Left ventricle myocardium superior (tissue), 1 donor: ENCODE measurements at regions of chr1 and their contacts with region 1.

Region 1: GRCh38 chr1:174769961-174770549 is 229.7 kb upstream of the CACYBP start:
- DNase-seq: no peak
- ATAC-seq: no peak

Region 2: DNA sequence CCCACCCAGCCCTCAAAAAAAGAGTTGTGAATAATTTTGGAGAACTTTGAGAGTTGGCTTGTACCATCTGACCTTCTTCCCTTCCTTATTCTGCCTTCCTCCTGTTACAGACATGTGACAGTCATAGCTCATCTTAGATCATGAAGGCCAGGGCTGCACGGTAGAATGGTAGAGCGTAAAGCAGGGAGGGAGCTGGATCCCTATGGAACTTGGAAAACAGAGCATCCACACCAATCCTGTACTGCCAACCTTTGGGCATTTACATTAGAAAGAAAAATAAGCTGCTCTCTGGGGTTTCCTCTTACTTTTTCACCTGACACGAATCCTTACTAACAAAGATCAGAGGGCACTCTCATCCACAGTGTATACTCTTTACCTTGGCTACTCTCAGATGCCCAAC is 200.8 kb before region 1 on chr1:
- intact Hi-C with region 1: no loop called
- DNase-seq: no peak
- ATAC-seq: no peak

Region 3: GRCh38 chr1:174692313-174692712 is 77.7 kb before region 1 on chr1:
- intact Hi-C with region 1: no loop called
- DNase-seq: no peak
- ATAC-seq: no peak

Region 4: DNA sequence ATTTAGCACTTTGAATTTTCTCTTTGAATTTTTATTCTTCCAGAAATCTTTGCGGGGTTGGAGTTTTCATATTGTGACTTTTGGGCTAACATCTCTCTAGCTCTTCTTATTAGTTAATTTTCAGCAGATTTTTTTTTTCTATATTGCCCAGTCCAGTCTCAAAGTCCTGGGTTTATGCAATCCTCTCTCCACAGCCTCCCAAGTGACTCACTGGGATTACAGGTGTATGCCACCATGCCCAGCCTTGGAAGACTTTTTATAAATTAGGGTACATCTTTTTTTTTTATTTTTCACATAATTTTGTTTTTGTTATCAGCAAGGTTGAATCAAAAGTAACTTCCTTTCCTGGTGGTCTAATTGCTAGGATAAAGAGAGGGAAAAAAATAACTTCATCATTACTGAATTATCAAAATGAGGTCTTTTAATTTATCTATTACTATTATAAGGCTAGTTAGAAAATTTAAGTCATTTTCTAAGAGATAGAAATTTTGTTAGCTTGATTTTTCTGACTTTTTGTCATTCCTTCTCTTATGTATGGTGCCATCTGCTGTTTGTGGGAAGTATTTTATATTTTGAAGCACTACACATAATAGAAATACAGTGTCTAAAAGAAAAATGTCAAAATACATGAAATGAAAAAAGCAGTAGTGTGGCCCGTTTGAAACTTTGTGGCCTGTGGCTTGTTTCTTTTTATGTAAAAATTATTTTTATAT is 43.7 kb before region 1 on chr1:
- intact Hi-C with region 1: no loop called
- DNase-seq: no peak
- ATAC-seq: no peak

Region 5: DNA sequence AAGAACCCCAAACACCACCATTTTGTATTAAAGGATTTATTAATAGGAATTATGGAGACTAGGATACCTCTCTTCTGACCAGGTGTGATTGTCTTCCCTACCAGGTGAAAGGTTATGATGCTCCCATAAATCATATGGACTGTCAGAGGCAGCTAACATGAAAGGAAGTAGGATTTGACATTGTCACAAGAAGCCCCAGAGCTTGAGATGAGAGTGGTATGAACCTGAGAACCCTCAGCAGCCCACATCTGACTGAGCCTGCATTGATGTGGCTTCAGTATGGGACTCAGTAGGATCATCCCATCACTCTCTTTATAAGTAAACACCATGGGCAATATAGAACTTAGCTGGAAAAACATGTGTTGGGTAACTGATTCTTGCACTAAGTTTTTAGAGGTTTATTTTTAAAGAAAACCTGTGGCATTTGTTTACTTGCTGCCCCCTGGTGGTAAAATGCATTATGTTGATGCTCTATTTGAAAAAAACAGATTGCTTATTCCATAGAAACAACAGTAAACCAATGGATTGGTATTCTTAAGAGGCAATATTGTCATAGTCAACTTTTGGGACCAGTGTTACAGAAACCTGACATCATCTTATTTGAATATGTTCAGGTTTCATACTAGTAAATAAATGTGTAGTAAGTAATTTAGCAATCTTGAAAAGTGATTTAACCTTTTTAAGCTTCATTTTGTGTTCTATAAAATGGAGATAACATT is 213.1 kb after region 1 on chr1:
- intact Hi-C with region 1: loop called (anchors 2 kb)
- DNase-seq: no peak
- ATAC-seq: no peak

Region 6: DNA sequence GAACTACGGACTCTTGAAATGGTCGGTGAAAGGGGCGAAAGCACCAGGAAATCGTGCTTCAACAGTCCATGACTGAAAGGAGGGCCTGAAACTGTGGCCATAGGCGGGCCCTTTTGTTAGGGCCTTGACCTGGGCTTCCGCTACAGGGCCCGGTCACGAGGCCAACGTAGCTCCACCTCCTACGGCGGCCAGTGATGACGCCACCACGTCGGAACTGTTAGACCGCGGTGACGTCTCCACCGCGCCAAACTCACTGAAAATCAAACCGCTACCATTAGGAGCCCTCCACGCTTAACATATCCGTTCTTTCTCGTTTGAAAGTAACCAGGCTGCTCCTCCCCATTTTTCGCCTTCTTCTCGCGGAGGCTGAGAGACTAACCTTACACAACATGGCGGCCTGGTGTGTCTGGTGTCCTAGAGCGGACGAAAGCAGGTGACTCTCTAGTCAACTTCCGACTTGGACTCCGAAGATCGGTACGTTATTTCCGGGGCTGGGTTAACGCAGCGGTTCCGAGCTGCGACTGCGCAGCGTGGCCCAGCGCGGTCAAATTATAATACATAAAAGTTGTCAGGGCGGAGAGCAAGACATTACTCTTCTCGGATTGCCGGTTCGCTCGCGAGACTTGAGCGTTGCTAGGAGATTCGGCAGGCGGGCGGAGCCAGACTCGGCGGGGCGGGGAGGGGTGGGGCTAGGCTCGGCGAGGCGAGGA is 229.3 kb after region 1 on chr1:
- intact Hi-C with region 1: loop called (anchors 5 kb)
- DNase-seq: peak; percentile 98
- ATAC-seq: peak; percentile 91